GM12878 (cell line): ENCODE measurements at regions of chr3 and their contacts with region 1.

Region 1: DNA sequence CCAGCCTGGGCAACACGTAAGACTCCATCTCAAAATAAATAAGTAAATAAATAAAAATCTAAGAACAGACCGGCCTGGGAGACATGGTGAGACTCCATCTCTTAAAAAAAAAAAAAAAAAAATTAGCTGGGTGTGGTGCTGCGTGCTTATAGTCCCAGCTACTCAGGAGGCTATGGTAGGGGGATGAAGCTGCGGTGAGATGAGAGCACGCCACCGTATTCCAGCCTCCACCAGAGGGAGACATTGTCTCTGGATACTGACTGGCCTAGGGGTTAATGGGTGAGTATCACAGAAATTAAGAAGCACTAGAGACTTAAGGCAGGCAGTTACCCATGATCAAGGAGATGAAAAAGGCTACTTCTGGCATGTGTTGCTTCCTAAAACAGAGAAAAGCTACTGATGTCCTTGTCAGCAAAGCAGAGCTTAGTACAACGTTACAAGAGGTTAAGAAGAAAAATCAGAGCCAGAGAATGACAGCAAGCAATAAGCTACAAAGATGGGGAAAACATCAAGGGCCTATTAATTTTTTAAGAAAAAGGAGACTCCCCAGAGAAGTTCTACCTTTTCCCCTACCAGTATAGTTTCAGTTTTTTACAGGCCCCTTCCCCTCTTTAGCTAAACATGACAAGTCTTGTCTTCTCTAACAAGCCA is 8.6 kb downstream of the TFRC start:
- DNase-seq: peak; percentile 50
- ATAC-seq: peak; percentile 94
- H3K4me3 ChIP-seq: no peak overlapping the region
- H3K27ac ChIP-seq: no peak overlapping the region
- H3K4me1 ChIP-seq: peaks cover 14% of the 10 kb centered on the region; the same call in 1 of the 2 replicates
- H3K27me3 ChIP-seq: no peaks in the 10 kb centered on the region
- CTCF ChIP-seq: peak; percentile 72 to 81 (median 76)
- EP300 ChIP-seq: no peak
- POLR2A ChIP-seq: no peak
- RAD21 ChIP-seq: peak; percentile 95

Region 2: GRCh38 chr3:196023947-196024346 is 49.4 kb before region 1 on chr3:
- CTCF ChIA-PET with region 1: interaction called, 29 read pairs
- POLR2A ChIA-PET with region 1: no interaction called
- RAD21 ChIA-PET with region 1: interaction called, 10 read pairs
- SMC1A ChIA-PET with region 1: interaction called, 44 read pairs
- in situ Hi-C with region 1: no loop called
- intact Hi-C with region 1: loop called (anchors 5 kb)
- DNase-seq: no peak
- ATAC-seq: no peak
- H3K4me3 ChIP-seq: no peak overlapping the region
- H3K27ac ChIP-seq: no peak overlapping the region
- H3K4me1 ChIP-seq: no peaks in the 10 kb centered on the region
- H3K27me3 ChIP-seq: no peaks in the 10 kb centered on the region; a peak in 1 of 4 replicates
- CTCF ChIP-seq: no peak
- EP300 ChIP-seq: no peak
- POLR2A ChIP-seq: no peak
- RAD21 ChIP-seq: no peak

Region 3: DNA sequence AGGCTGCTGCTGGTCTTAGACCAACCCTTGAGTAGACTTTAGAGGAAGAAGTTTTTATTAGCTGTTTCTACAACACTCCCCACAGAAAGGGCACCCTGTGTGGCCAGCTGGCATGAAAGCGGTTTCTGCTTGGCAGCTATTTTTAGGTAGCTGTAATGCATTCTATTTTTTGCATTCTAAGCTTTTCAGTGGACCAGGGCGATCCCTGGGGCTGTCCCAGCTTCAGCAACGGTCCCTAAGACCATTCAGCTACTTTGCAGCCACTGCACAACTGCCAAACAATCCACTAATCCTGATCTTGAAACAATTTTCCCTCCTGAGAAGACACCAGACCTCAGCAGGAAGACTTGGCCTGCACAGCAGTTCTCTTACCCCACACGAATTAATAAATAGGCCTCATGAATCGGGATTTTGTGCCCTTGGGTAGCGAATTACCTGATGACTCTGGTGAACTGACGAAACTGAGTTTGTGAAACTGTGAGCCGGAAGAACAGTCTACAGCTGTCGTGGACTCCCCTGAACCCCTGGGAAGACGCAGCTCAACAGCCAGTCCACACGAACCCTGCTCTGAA is 23.2 kb after region 1 on chr3:
- CTCF ChIA-PET with region 1: interaction called, 42 read pairs
- POLR2A ChIA-PET with region 1: interaction called, 85 read pairs
- RAD21 ChIA-PET with region 1: interaction called, 36 read pairs
- SMC1A ChIA-PET with region 1: interaction called, 80 read pairs
- in situ Hi-C with region 1: no loop called
- intact Hi-C with region 1: no loop called
- DNase-seq: peak; percentile 87
- ATAC-seq: peak; percentile 95
- H3K4me3 ChIP-seq: peak overlapping the region; percentile 19; the same call in 1 of the 2 replicates
- H3K27ac ChIP-seq: peak overlapping the region; percentile 90
- H3K4me1 ChIP-seq: peaks cover 29% of the 10 kb centered on the region
- H3K27me3 ChIP-seq: no peaks in the 10 kb centered on the region
- CTCF ChIP-seq: no peak
- EP300 ChIP-seq: peak in 1 of 2 experiments; percentile 15; a peak in 1 of 4 replicates
- POLR2A ChIP-seq: no peak
- RAD21 ChIP-seq: no peak

Region 4: DNA sequence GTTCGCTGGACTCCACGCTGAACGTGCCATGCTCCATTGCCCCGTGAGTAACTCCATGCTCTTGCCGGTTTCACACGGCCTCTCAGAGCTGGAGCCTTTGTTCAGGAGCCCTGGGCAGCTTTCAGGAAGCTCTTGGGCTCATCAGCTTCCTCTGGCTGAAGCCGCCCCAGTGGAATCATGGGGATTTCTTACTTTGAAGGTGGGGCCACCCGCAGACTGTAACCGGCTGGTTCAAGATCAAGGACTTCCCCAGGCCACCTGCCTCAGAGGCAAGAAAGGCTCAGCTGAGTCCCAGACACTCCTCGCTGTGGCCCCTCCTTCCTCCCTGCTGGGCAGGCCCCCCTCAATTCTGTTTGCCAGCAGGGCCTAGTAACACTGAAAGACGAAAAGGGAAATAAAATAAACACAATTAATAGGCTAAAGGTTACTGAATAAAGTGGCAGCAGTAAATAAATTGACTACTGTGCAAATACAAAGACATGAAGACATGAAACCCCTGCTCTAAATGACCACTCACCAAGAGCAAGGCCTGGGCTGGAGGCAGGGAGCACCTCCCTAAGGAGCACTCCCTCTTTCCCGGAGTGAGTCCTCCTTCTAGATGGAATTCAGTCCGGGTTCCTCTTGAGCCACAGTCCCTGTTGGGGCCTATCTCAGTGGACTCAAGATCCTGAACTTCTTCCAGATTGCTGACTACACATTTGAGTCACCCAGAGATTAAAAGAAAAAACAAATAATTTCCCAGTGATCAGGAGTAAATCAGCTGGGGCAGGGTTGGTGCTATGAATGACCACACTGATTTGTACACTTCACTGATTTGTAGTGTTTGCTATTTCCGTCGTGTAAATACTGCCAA is 86.9 kb after region 1 on chr3:
- CTCF ChIA-PET with region 1: interaction called, 15 read pairs
- POLR2A ChIA-PET with region 1: interaction called, 10 read pairs
- RAD21 ChIA-PET with region 1: interaction called, 13 read pairs
- SMC1A ChIA-PET with region 1: interaction called, 25 read pairs
- in situ Hi-C with region 1: no loop called
- intact Hi-C with region 1: no loop called
- DNase-seq: peak; percentile 72
- ATAC-seq: peak; percentile 100
- H3K4me3 ChIP-seq: peak overlapping the region; percentile 14; the same call in 1 of the 2 replicates
- H3K27ac ChIP-seq: peak overlapping the region; percentile 66
- H3K4me1 ChIP-seq: peaks cover 12% of the 10 kb centered on the region
- H3K27me3 ChIP-seq: no peaks in the 10 kb centered on the region
- CTCF ChIP-seq: no peak
- EP300 ChIP-seq: 0 out of 4 replicates have a peak, but pooled peaks of 1 of the 2 experiments have one; percentile 10
- POLR2A ChIP-seq: peak; percentile 74
- RAD21 ChIP-seq: no peak

Region 5: DNA sequence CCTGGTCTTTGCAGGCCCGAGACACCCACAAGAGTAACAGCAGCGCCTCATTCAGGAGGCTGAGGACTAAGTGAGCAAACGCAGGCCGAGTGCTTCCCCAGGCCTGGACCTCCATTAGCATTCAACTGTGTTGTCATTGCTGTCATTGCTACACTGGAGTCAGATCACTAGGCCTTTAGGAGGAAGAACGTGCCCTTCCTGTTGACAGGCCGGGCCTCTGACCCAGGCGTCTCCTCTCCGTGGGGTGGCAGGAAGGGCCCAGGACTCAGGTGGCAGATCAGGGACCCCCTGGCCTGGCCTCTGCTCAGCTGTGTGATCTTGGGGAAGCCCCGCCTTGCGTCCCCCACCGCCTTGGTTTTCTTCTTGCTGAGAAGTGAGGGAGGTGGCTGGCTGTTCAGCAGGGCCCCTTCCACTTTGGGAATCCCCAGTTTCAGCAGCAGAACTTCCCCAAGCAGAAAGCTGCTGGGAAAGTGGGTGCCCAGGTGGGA is 118.8 kb after region 1 on chr3:
- CTCF ChIA-PET with region 1: interaction called, 157 read pairs
- POLR2A ChIA-PET with region 1: interaction called, 34 read pairs
- RAD21 ChIA-PET with region 1: interaction called, 113 read pairs
- SMC1A ChIA-PET with region 1: interaction called, 151 read pairs
- in situ Hi-C with region 1: loop called (anchors 5 kb)
- intact Hi-C with region 1: loop called (anchors 1 kb)
- DNase-seq: peak; percentile 74
- ATAC-seq: peak; percentile 77
- H3K4me3 ChIP-seq: peak overlapping the region; percentile 53; the same call in 1 of the 2 replicates
- H3K27ac ChIP-seq: peak overlapping the region; percentile 83
- H3K4me1 ChIP-seq: peaks cover 55% of the 10 kb centered on the region
- H3K27me3 ChIP-seq: no peaks in the 10 kb centered on the region
- CTCF ChIP-seq: peak in 1 of 3 experiments; percentile 5; a peak in 1 of 6 replicates
- EP300 ChIP-seq: peak; percentile 34 to 53; a peak in 3 of 4 replicates
- POLR2A ChIP-seq: peak; percentile 62
- RAD21 ChIP-seq: peak; percentile 42; the same call in 1 of the 2 replicates

Region 6: GRCh38 chr3:196260784-196261183 is 187.5 kb after region 1 on chr3:
- CTCF ChIA-PET with region 1: no interaction called
- POLR2A ChIA-PET with region 1: no interaction called
- RAD21 ChIA-PET with region 1: no interaction called
- SMC1A ChIA-PET with region 1: no interaction called
- in situ Hi-C with region 1: no loop called
- intact Hi-C with region 1: no loop called
- DNase-seq: no peak
- ATAC-seq: no peak
- H3K4me3 ChIP-seq: no peak overlapping the region
- H3K27ac ChIP-seq: no peak overlapping the region
- H3K4me1 ChIP-seq: no peaks in the 10 kb centered on the region
- H3K27me3 ChIP-seq: no peaks in the 10 kb centered on the region
- CTCF ChIP-seq: no peak
- EP300 ChIP-seq: no peak
- POLR2A ChIP-seq: no peak
- RAD21 ChIP-seq: no peak